ENCODE measurements at regions of chr10 and their contacts with region 1.

Region 1: DNA sequence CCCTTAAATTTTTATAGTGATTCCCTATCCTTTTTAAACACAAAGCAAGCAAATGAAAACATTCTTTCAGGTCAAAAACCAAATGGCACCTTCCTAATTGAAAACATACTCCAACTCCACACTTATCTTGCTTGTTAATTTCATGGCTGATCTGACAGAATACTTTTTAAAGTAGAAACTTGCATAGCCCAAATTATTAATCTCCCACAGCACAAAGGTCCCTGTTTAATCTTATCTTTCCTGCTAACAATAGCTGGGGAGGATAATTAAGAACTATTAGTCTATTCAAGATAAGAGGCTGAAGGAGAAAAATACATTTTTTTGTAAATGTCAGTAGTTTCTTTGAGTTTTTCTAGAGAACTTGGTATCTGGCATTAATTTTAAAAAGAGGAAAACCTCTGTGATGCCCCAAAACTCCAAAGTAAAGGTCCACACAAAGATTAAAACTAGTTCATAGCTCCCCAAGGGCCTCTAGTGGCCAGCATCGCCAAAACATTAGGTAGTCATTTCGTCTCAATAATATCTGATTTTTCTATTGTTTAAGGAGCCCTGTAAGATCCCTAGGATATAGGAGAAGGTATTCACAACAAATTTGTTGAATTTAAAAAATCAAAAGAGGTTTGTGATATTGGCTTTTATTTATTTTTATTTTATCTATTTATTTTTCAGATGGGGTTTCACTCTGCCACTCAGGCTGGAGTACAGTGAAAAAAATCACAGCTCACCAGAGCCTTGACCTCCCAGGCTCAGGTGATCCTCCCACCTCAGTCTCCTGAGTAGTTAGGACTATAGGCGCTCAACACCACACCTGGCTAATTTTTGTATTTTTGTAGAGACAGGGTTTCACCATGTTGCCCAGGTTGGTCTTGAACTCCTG is 14.7 kb downstream of the CDNF start:
- DNase-seq: peak; percentile 60
- H3K4me3 Mint-ChIP-seq: no peak overlapping the region
- H3K27ac Mint-ChIP-seq: no peak overlapping the region
- H3K4me1 Mint-ChIP-seq: peaks cover 11% of the 10 kb centered on the region
- H3K27me3 Mint-ChIP-seq: peaks cover 16% of the 10 kb centered on the region
- CTCF ChIP-seq: peak; percentile 69

Region 2: GRCh38 chr10:14195433-14195832 is 627.7 kb before region 1 on chr10:
- CTCF ChIA-PET with region 1: interaction called, 3 read pairs
- POLR2A ChIA-PET with region 1: no interaction called
- intact Hi-C with region 1: loop called (anchors 5 kb)
- DNase-seq: no peak
- H3K4me3 Mint-ChIP-seq: no peak overlapping the region
- H3K27ac Mint-ChIP-seq: no peak overlapping the region
- H3K4me1 Mint-ChIP-seq: no peaks in the 10 kb centered on the region
- H3K27me3 Mint-ChIP-seq: peaks cover 48% of the 10 kb centered on the region
- CTCF ChIP-seq: no peak

Region 3: GRCh38 chr10:14536241-14537213 is 286.6 kb before region 1 on chr10:
- CTCF ChIA-PET with region 1: interaction called, 102 read pairs
- POLR2A ChIA-PET with region 1: interaction called, 3 read pairs
- intact Hi-C with region 1: loop called (anchors 1 kb)
- DNase-seq: peak; percentile 82
- H3K4me3 Mint-ChIP-seq: no peak overlapping the region
- H3K27ac Mint-ChIP-seq: no peak overlapping the region
- H3K4me1 Mint-ChIP-seq: no peaks in the 10 kb centered on the region
- H3K27me3 Mint-ChIP-seq: no peaks in the 10 kb centered on the region
- CTCF ChIP-seq: peak; percentile 74

Region 4: DNA sequence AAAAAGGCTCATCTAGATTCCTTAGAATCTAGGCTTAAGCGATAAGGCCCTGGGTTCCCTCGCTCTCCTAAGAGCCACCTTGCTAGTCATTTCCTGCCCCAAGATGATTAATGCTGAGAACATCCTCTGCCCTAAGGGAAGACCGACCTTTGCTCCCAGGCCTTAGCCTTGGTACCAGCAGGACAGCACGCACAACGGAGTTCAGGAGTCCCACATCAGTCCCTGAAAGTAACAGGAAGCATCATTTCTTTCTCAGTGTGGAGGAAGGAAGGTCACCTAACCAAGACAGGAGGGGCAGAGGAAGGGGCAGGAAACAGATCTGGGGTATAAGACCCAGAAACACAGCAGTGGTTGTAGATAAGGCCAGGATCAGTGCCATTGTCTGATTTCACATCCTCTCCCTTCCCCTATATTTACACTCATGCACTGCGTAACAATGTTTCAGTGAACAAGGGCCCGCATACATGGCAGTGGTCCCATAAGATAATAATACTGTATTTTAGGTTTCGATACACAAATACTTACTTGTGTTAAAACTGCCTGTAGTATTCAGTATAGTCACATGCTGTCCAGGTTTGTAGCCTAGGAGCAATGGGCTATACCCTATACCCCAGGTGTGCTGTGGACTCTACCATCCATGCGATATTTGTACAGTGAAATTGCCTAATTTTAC is 40.3 kb before region 1 on chr10:
- CTCF ChIA-PET with region 1: no interaction called
- POLR2A ChIA-PET with region 1: no interaction called
- intact Hi-C with region 1: no loop called
- DNase-seq: peak; percentile 58
- H3K4me3 Mint-ChIP-seq: no peak overlapping the region
- H3K27ac Mint-ChIP-seq: no peak overlapping the region
- H3K4me1 Mint-ChIP-seq: peaks cover 12% of the 10 kb centered on the region
- H3K27me3 Mint-ChIP-seq: no peaks in the 10 kb centered on the region
- CTCF ChIP-seq: no peak

Region 5: GRCh38 chr10:14812271-14812670 is 10.8 kb before region 1 on chr10:
- CTCF ChIA-PET with region 1: interaction called, 11 read pairs
- POLR2A ChIA-PET with region 1: no interaction called
- intact Hi-C with region 1: no loop called
- DNase-seq: no peak
- H3K4me3 Mint-ChIP-seq: no peak overlapping the region
- H3K27ac Mint-ChIP-seq: no peak overlapping the region
- H3K4me1 Mint-ChIP-seq: no peaks in the 10 kb centered on the region
- H3K27me3 Mint-ChIP-seq: no peaks in the 10 kb centered on the region
- CTCF ChIP-seq: no peak

Region 6: DNA sequence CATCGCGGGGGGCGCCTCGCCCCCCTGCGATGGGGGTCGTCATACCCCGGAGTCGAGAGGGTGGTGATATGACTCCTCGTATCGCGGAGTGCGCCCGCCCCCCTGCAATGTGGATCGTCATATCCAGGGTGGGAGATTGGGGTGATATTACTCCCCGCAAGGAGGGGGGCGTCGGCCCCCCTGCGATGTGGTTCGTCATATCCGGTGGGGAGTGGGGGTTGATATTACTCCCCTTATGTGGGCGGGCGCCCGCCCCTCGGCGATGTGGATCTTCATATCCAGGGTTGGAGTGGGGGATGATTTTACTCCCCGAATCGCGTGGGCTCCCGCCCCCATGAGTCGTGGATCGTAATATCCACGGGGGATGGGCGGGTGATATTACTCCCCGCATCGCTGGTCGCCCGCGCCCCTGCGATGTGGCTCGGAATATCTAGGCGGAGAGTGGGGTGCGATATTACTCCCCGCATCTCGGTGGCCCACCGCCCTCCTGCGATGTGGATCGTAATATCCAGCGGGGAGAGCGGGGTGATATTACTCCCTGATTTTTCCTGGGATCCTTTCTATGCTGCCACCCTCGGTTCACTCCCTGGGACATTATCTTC is 172.9 kb after region 1 on chr10:
- CTCF ChIA-PET with region 1: no interaction called
- POLR2A ChIA-PET with region 1: no interaction called
- intact Hi-C with region 1: no loop called
- DNase-seq: no peak
- H3K4me3 Mint-ChIP-seq: peak overlapping the region; percentile 60
- H3K27ac Mint-ChIP-seq: no peak overlapping the region
- H3K4me1 Mint-ChIP-seq: peaks cover 7% of the 10 kb centered on the region
- H3K27me3 Mint-ChIP-seq: peaks cover 12% of the 10 kb centered on the region
- CTCF ChIP-seq: no peak